ENCODE measurements at regions of chr19 and their contacts with region 1.

Region 1: GRCh38 chr19:41203371-41203770 is 10.4 kb downstream of the CYP2S1 start:
- DNase-seq: no peak
- H3K4me3 ChIP-seq: no peak overlapping the region
- H3K27ac ChIP-seq: no peak overlapping the region
- H3K4me1 ChIP-seq: peaks cover 6% of the 10 kb centered on the region
- H3K27me3 ChIP-seq: peaks cover 24% of the 10 kb centered on the region
- CTCF ChIP-seq: no peak

Region 2: GRCh38 chr19:41161903-41162302 is 41.5 kb before region 1 on chr19:
- intact Hi-C with region 1: no loop called
- DNase-seq: no peak
- H3K4me3 ChIP-seq: no peak overlapping the region
- H3K27ac ChIP-seq: no peak overlapping the region
- H3K4me1 ChIP-seq: no peaks in the 10 kb centered on the region
- H3K27me3 ChIP-seq: peaks cover 6% of the 10 kb centered on the region
- CTCF ChIP-seq: no peak

Region 3: GRCh38 chr19:41263850-41264580 is 60.6 kb after region 1 on chr19 and contains the start of gene HNRNPUL1:
- intact Hi-C with region 1: loop called (anchors 5 kb)
- DNase-seq: peak; percentile 98
- H3K4me3 ChIP-seq: peak within 1 kb of the TSS; percentile 99
- H3K27ac ChIP-seq: peak within 1 kb of the TSS; percentile 100
- H3K4me1 ChIP-seq: peaks cover 56% of the 10 kb centered on the region
- H3K27me3 ChIP-seq: no peaks in the 10 kb centered on the region
- CTCF ChIP-seq: no peak
- total RNA-seq, gene HNRNPUL1: 103 TPM